Mammary epithelial cell (primary cell): ENCODE measurements at regions of chr19 and their contacts with region 1.

Region 1: DNA sequence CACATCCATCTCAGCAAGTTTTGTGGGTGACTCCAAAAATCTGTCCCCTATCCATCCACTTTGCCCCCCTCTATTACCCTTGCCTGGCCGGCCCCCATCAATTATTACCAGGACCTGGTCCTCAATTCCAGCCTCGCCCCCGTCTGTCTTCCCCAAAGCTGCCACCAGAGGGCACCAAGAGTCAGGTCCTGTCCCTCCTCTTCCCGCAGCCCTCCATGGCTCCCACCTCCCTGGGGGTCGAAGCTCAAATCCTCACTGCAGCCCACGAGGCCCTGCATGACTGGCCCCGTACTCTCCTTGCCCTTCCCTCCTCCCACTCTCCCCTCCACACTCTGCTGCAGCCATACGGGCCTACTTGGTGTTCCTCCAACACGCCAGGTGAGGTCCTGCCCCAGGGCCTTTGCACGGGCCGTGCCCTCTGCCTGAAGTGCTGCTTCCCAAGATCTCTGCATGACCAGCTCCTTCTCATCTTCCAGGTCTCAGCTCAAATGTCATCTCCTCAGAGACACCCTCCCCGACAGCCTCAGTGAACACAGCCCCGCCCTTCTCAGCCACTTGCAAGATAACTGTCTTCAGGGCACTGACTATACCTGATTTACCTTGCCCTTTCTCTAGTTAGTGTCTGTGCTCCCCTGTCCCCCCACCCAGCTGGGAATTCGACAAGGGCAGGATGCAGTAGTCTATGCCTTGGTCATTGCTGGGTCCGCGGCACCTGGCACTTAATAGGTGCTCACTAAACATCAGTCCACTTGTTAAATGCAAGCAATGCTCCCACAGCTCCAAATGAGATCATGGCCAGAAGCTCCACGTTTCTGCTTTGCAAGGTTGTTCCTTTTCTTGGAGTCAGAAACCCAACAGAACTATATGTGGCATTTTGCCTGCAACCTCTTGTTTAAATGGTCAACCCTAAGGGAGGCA is 16.8 kb upstream of the SEMA6B start:
- DNase-seq: no peak
- H3K4me3 ChIP-seq: no peak overlapping the region
- H3K27ac ChIP-seq: no peak overlapping the region
- H3K4me1 ChIP-seq: peaks cover 11% of the 10 kb centered on the region
- H3K27me3 ChIP-seq: peaks cover 9% of the 10 kb centered on the region
- CTCF ChIP-seq: peak; percentile 51 to 79

Region 2: GRCh38 chr19:4400135-4400936 is 175.9 kb before region 1 on chr19 and contains the start of gene SH3GL1:
- CTCF ChIA-PET with region 1: no interaction called
- dilution Hi-C with region 1: no loop called
- in situ Hi-C with region 1: no loop called
- intact Hi-C with region 1: no loop called
- DNase-seq: peak; percentile 75
- H3K4me3 ChIP-seq: peak within 1 kb of the TSS; percentile 75 to 96 (median 87)
- H3K27ac ChIP-seq: peak within 1 kb of the TSS; percentile 95
- H3K4me1 ChIP-seq: peaks cover 19% of the 10 kb centered on the region
- H3K27me3 ChIP-seq: no peaks in the 10 kb centered on the region
- CTCF ChIP-seq: peak; percentile 91 to 98
- total RNA-seq, gene SH3GL1: 80.5 to 149 TPM

Region 3: GRCh38 chr19:4449022-4449638 is 127.1 kb before region 1 on chr19:
- CTCF ChIA-PET with region 1: no interaction called
- dilution Hi-C with region 1: loop called (anchors 10 kb)
- in situ Hi-C with region 1: no loop called
- intact Hi-C with region 1: no loop called
- DNase-seq: no peak
- H3K4me3 ChIP-seq: no peak overlapping the region
- H3K27ac ChIP-seq: no peak overlapping the region
- H3K4me1 ChIP-seq: no peaks in the 10 kb centered on the region
- H3K27me3 ChIP-seq: no peaks in the 10 kb centered on the region
- CTCF ChIP-seq: no peak

Region 4: DNA sequence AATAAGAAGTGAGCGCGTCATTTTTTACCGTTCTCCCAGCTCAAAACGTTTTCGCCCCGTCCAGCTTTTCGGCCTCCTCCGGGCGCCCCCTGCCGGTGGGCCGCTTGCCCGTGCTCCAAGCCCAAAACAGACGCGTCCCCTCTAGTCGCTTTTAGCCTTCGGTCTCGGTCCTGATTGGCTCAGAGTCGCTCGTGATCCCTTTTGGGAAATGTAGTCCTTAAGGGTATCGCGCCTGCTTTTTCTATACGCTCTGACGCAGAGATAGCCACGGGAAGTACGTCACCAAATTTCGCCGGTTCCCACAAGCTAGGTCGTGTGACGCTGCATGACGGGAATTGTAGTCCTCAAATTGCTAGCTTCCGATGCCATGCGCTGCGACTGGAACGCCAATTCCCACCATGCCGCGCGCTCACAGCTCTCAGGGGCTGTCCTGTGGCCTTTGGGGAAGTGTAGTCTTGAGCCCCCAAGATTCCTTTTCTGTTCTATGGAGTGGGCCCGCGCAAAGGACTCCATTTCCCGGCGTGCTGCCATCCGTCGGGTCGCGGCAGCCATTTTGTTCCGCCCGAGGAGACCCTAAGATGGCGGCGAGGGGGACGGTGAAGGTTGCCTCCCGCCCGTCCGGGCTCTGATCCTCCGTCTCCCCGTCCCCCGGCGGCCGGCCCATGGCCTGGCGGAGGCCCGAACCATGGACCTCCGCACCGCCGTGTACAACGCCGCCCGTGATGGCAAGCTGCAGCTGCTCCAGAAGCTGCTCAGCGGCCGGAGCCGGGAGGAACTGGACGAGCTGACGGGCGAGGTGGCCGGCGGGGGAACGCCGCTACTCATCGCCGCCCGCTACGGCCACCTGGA is 215.1 kb after region 1 on chr19 and contains the start of gene FEM1A:
- CTCF ChIA-PET with region 1: no interaction called
- dilution Hi-C with region 1: no loop called
- in situ Hi-C with region 1: no loop called
- intact Hi-C with region 1: loop called (anchors 10 kb)
- DNase-seq: peak; percentile 100
- H3K4me3 ChIP-seq: peak within 1 kb of the TSS; percentile 68 to 89 (median 77)
- H3K27ac ChIP-seq: peak within 1 kb of the TSS; percentile 78
- H3K4me1 ChIP-seq: peaks cover 39% of the 10 kb centered on the region
- H3K27me3 ChIP-seq: no peaks in the 10 kb centered on the region
- CTCF ChIP-seq: peak; percentile 98 to 99
- total RNA-seq, gene FEM1A: 12.8 to 17.5 TPM